Naive thymus-derived CD4-positive, alpha-beta T cell (primary cell): ENCODE measurements at regions of chr3 and their contacts with region 1.

Region 1: DNA sequence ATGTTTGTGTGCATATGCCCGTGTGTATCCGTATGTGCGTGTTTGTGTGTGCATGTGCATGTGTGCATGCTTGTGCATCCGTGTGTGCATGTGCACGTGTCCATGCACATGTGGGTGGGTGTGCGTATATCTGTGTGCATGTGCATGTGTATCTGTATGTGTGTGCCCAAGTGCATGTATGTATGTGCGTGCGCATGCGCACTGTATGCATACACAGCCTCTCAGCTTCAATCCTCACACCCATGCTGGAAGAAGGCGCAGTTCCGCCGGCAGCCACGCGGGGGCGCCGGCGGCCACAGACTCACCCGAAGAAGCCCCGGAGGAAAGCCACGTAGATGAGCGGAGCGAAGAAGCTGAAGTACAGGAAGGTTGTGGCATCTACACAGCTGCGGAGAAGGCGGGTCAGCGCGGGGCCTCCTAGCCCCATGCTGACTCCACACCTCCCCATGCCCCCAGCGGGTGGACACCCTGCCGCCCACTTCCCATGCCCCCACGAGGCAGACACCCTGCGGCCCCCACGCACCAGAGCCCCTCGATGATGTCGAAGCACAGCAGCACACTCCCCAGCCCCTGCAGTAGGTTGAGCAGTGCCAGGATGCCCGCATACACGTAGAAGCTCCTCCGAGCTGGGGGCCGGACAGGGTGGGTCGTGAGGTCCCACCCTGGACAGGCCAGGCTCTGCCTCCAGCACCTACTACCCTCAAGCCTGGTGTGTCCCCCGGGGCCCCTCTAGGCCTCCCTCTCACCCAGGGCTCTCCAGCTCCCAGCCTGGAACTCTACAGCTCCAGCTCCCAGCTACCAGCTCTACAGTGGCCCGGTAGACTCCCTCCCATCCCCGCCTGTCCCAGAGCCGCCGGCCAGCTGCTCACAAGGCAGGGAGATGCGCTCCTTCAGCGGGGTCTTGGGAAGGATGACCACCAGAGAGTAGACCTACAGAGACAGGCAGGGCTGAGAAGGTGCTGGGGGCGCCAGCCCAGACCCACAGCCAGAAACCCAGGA is 15.4 kb downstream of the TPRA1 start:
- DNase-seq: peak; percentile 77 to 86 (median 83)
- ATAC-seq: peak; percentile 96
- H3K4me3 ChIP-seq: no peak overlapping the region
- H3K4me3 Mint-ChIP-seq: peak overlapping the region in 7 of 10 donors; percentile 18 to 57 (median 32)
- H3K27ac ChIP-seq: peak overlapping the region; percentile 39
- H3K27ac Mint-ChIP-seq: peak overlapping the region in 8 of 9 donors; percentile 4 to 81 (median 50)
- H3K4me1 ChIP-seq: peaks cover 0 to 7% of the 10 kb centered on the region in 2 donors
- H3K4me1 Mint-ChIP-seq: peaks cover 8 to 22% (median 13%) of the 10 kb centered on the region in 7 donors
- H3K27me3 ChIP-seq: no peaks in the 10 kb centered on the region
- H3K27me3 Mint-ChIP-seq: no peaks in the 10 kb centered on the region

Region 2: DNA sequence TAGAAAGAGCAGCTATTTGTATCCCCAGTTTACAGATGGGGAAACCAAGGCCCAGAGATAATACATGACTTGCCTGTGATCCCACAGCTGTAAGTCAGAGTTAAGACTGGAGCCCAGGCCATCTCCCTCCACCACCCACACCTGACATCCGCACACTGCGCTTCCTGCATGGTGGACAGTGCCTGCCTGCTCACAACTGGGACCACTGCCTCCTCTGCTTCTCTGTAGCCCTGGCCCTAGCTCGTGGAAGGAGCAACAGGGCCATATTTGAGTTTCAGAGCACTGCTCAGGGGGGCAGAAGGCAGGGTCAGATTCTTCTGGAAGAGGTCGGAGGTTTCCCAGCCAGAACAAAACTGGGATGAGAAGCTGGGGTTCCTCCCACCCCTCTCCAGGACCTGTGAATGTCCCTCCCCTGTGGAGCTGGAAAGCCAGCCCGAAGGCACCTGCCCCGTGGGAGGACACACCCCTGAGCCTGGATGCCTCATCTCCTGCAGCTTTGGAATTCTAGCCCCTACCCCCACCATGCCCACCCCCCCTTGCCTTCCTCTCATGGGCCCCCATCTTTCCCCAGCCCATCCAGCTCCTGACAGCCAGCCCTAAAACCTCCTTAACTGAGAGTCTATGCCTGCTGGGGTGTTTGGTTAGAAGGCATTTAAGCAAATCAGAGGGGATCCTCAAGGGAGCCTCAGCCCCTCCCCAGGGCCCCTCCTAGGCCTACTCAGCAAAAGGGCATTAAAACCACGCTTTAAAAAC is 84.7 kb before region 1 on chr3:
- CTCF ChIA-PET with region 1: no interaction called
- POLR2A ChIA-PET with region 1: no interaction called
- intact Hi-C with region 1: no loop called
- DNase-seq: peak in 1 of 9 donors; percentile 1
- ATAC-seq: no peak
- H3K4me3 ChIP-seq: no peak overlapping the region
- H3K4me3 Mint-ChIP-seq: no peak overlapping the region
- H3K27ac ChIP-seq: no peak overlapping the region
- H3K27ac Mint-ChIP-seq: no peak overlapping the region
- H3K4me1 ChIP-seq: no peaks in the 10 kb centered on the region
- H3K4me1 Mint-ChIP-seq: peaks cover 0 to under 1% (median 0%) of the 10 kb centered on the region in 7 donors
- H3K27me3 ChIP-seq: no peaks in the 10 kb centered on the region
- H3K27me3 Mint-ChIP-seq: peaks cover 2 to 43% (median 24%) of the 10 kb centered on the region in 5 donors

Region 3: DNA sequence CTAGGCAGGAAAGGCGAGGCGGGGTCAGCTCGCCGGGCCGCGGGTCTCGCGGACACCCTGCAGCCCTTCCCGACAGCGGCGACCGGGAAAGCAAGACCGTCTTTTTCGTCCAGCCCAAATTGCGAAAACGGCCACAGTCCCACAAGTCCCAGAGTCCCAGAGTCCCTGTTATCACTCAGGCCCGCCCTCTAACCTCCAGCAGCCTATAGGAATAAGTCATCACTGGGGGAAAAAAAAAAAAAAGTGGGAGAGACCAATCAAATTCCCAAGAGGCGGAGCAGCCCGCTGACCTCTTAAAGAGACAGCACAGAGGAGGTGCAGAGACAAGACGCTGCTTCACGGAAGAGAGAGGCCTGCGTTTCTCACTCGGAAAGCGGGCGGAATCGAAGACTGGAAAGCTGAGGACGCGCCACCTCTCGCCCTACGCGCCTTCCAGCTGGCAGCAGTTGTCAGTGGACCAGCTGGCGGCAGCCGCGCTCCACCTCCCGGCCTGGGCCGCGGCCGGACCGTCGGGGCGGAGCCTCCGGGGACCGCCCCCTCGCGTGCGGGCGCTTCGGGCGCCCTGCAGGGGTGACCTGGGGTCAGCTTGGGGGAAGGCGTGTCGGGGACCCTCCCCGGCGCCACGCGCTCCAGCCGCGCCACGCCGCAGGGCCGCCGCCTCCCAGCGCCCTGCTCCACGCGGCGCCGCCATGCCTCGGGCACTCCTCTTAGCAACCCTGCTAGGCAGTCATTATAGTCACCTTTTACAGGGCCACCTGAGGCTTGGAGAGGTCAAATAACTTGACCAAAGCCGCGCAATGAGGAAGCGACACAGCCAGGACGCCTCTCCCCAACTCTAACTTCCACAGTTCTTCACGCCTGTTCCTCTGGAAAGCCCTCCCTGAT is 15.7 kb after region 1 on chr3 and contains the start of gene TPRA1:
- CTCF ChIA-PET with region 1: interaction called, 7 read pairs
- POLR2A ChIA-PET with region 1: interaction called, 4 read pairs
- intact Hi-C with region 1: loop called (anchors 1 kb)
- DNase-seq: peak; percentile 58 to 90 (median 85)
- ATAC-seq: peak; percentile 90
- H3K4me3 ChIP-seq: peak within 1 kb of the TSS; percentile 91
- H3K4me3 Mint-ChIP-seq: peak within 1 kb of the TSS; percentile 86 to 99 (median 96)
- H3K27ac ChIP-seq: peak within 1 kb of the TSS; percentile 80
- H3K27ac Mint-ChIP-seq: peak within 1 kb of the TSS; percentile 86 to 96 (median 94)
- H3K4me1 ChIP-seq: peaks cover 11 to 12% of the 10 kb centered on the region in 2 donors
- H3K4me1 Mint-ChIP-seq: peaks cover 14 to 51% (median 43%) of the 10 kb centered on the region in 7 donors
- H3K27me3 ChIP-seq: no peaks in the 10 kb centered on the region
- H3K27me3 Mint-ChIP-seq: no peaks in the 10 kb centered on the region
- total RNA-seq, gene TPRA1: 13.6 to 30.6 (median 24.5) TPM

Region 4: DNA sequence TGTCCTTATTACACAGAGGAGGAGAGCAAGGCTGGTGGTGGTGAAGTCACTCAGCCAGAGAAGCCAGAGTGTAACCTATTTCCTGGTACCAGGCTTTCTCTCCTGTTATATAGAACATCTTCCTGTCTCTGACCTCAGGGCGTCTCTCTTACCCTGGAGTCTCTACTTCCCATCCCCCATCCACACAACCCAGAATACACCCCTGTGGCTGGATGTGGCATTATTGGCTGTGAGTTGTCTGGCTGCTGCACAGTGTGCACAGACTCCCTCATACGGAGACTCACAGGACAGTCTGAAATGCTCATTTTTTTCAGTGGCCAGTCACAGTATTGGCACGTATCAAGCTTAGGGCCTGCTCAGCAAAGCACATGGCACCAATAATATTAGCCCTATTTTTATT is 62.4 kb after region 1 on chr3:
- CTCF ChIA-PET with region 1: no interaction called
- POLR2A ChIA-PET with region 1: no interaction called
- intact Hi-C with region 1: loop called in 1 of 2 experiments (anchors 5 kb)
- DNase-seq: peak in 6 of 9 donors; percentile 7 to 49 (median 36)
- ATAC-seq: peak; percentile 81
- H3K4me3 ChIP-seq: no peak overlapping the region
- H3K4me3 Mint-ChIP-seq: peak overlapping the region in 4 of 10 donors; percentile 21 to 49 (median 35)
- H3K27ac ChIP-seq: no peak overlapping the region
- H3K27ac Mint-ChIP-seq: peak overlapping the region in 3 of 9 donors; percentile 52 to 72 (median 61)
- H3K4me1 ChIP-seq: peaks cover 0 to 7% of the 10 kb centered on the region in 2 donors
- H3K4me1 Mint-ChIP-seq: peaks cover 6 to 16% (median 10%) of the 10 kb centered on the region in 7 donors
- H3K27me3 ChIP-seq: peaks cover 0 to 2% of the 10 kb centered on the region in 2 donors
- H3K27me3 Mint-ChIP-seq: peaks cover 7 to 12% (median 9%) of the 10 kb centered on the region in 5 donors

Region 5: GRCh38 chr3:127672516-127673190 is 97.5 kb after region 1 on chr3 and contains the start of gene ABTB1:
- CTCF ChIA-PET with region 1: no interaction called
- POLR2A ChIA-PET with region 1: interaction called, 5 read pairs
- intact Hi-C with region 1: loop called in 1 of 2 experiments (anchors 1 kb)
- DNase-seq: peak; percentile 73 to 88 (median 83)
- ATAC-seq: peak; percentile 93
- H3K4me3 ChIP-seq: peak within 1 kb of the TSS; percentile 86
- H3K4me3 Mint-ChIP-seq: peak within 1 kb of the TSS; percentile 88 to 96 (median 94)
- H3K27ac ChIP-seq: peak within 1 kb of the TSS; percentile 98
- H3K27ac Mint-ChIP-seq: peak within 1 kb of the TSS; percentile 92 to 98 (median 97)
- H3K4me1 ChIP-seq: peaks cover 13 to 17% of the 10 kb centered on the region in 2 donors
- H3K4me1 Mint-ChIP-seq: peaks cover 17 to 37% (median 33%) of the 10 kb centered on the region in 7 donors
- H3K27me3 ChIP-seq: no peaks in the 10 kb centered on the region
- H3K27me3 Mint-ChIP-seq: no peaks in the 10 kb centered on the region
- total RNA-seq, gene ABTB1: 26.7 to 182 (median 124) TPM

Region 6: GRCh38 chr3:127831723-127832172 is 256.6 kb after region 1 on chr3:
- CTCF ChIA-PET with region 1: no interaction called
- POLR2A ChIA-PET with region 1: no interaction called
- intact Hi-C with region 1: loop called (anchors 2 to 5 kb)
- DNase-seq: no peak
- ATAC-seq: peak; percentile 68
- H3K4me3 ChIP-seq: no peak overlapping the region
- H3K4me3 Mint-ChIP-seq: no peak overlapping the region
- H3K27ac ChIP-seq: no peak overlapping the region
- H3K27ac Mint-ChIP-seq: no peak overlapping the region
- H3K4me1 ChIP-seq: no peaks in the 10 kb centered on the region
- H3K4me1 Mint-ChIP-seq: peaks cover 0 to 4% (median 0%) of the 10 kb centered on the region in 7 donors
- H3K27me3 ChIP-seq: no peaks in the 10 kb centered on the region
- H3K27me3 Mint-ChIP-seq: peaks cover 11 to 55% (median 25%) of the 10 kb centered on the region in 5 donors

Region 7: GRCh38 chr3:128133273-128134084 is 558.3 kb after region 1 on chr3:
- CTCF ChIA-PET with region 1: no interaction called
- POLR2A ChIA-PET with region 1: no interaction called
- intact Hi-C with region 1: loop called in 1 of 2 experiments (anchors 1 kb)
- DNase-seq: peak in 5 of 9 donors; percentile 14 to 34 (median 23)
- ATAC-seq: peak; percentile 76
- H3K4me3 ChIP-seq: no peak overlapping the region
- H3K4me3 Mint-ChIP-seq: no peak overlapping the region
- H3K27ac ChIP-seq: no peak overlapping the region
- H3K27ac Mint-ChIP-seq: no peak overlapping the region
- H3K4me1 ChIP-seq: no peaks in the 10 kb centered on the region
- H3K4me1 Mint-ChIP-seq: no peaks in the 10 kb centered on the region
- H3K27me3 ChIP-seq: no peaks in the 10 kb centered on the region
- H3K27me3 Mint-ChIP-seq: peaks cover 0 to 34% (median 3%) of the 10 kb centered on the region in 5 donors